ENCODE measurements at regions of chr18 and their contacts with region 1.

Region 1: DNA sequence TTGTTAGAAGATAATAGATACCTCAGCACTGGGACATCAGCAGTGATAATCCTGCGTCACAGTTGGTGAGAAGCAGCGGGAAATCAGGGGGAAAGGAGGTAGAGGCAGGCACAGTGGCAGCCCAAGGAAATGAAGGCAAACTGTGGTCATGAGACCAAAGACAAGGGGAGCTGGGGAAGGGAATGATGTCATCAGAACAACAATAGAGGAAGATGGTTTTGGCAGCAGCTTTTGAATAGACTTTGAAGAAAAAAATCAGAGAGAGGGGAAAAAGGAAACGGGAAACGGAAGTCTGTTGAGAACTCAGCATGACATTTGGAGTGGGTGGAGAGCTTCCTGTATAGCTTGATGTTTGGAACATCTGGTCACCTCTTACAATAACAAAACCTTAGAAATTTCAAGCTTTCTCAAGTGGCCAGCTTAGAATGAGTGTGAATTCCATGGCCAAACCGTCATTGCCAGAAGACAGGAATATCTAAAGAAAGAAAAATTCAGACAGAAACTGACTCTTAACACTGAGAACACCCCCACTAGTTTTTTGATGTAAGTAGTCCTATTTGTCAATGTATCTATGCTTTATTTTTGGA is 18.4 kb upstream of the YES1 start:
- DNase-seq: peak; percentile 23 to 29
- H3K4me3 ChIP-seq: no peak overlapping the region
- H3K4me1 ChIP-seq: peaks cover 25% of the 10 kb centered on the region
- H3K27me3 ChIP-seq: no peaks in the 10 kb centered on the region

Region 2: GRCh38 chr18:564708-565561 is 265.5 kb before region 1 on chr18:
- in situ Hi-C with region 1: no loop called
- DNase-seq: no peak
- H3K4me3 ChIP-seq: no peak overlapping the region
- H3K4me1 ChIP-seq: no peaks in the 10 kb centered on the region
- H3K27me3 ChIP-seq: peaks cover 13% of the 10 kb centered on the region

Region 3: DNA sequence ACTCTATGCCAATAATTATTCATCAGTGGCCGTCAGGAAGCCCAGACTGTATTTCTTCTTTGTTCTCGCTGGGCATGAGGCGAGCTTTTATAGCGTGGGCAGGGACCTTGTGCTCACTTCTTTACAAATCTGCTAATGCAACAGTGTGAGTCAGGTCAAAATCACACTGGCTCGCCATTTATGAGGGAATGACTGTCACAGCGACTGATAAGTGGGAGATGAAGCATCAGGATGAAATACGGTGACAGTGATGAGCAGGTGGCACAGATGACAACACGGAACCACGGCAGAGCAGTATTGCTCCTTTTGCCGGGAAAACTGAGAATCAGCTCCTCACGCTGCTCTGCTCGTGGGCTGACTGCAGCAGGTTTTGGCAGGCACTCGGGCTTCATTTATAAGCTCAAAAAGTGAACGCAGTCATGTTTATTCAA is 152.4 kb before region 1 on chr18:
- in situ Hi-C with region 1: no loop called
- DNase-seq: peak in 1 of 2 experiments; percentile 5
- H3K4me3 ChIP-seq: no peak overlapping the region
- H3K4me1 ChIP-seq: no peaks in the 10 kb centered on the region
- H3K27me3 ChIP-seq: no peaks in the 10 kb centered on the region

Region 4: DNA sequence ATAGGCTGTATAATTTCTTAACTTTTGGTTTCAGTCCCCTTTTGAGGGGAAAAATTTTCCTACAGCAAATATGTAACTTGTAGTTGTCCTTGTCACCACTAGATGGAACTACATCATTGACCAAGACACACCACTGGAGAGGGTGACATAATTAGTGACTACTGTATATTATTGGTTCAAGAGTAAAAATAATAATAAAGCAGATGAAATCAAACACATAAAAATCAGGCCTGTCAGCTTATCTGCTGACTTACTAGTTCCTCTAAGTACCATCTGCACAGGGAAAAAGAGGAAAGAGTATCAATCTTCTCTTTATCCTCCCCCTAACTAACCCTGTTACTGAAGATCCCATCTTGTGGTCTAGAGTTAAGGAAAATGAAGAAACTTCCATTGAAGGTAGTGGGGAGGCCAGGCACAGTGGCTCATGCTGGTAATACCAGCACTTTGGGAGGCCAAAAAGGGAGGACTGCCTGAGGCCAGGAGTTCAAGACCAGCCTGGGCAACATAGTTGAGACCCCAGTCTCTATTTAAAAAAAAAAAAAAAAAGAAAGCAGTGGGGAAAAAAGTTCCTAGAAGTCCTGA is 88.4 kb before region 1 on chr18:
- in situ Hi-C with region 1: loop called (anchors 5 kb)
- DNase-seq: peak in 1 of 2 experiments; percentile 77
- H3K4me3 ChIP-seq: no peak overlapping the region
- H3K4me1 ChIP-seq: peaks cover 14% of the 10 kb centered on the region; the same call in 1 of the 2 replicates
- H3K27me3 ChIP-seq: no peaks in the 10 kb centered on the region

Measured in HAP-1 (cell line).